ENCODE measurements at regions of chr12 and their contacts with region 1.

Region 1: DNA sequence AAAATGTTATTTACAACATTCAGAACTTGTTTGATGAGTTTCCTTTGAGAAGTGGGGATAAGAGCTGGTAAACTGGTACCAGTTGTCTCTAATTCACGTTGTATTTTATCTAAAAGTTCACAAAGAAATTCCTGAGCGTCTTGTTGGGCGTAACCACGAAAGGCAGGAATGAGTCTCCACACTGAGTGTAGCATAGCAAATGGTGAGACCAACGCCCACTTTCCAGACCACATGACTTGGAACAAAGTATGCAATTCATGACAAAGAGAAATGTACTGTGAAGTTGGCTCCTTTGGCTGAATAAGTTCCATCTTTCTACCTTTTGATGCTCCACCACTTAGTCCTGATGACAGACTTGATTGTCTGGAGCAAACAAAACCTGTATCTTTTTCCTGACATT is 18.4 kb downstream of the USP44 start:
- DNase-seq: no peak
- ATAC-seq: no peak
- H3K4me3 ChIP-seq: no peak overlapping the region
- H3K27ac ChIP-seq: no peak overlapping the region
- H3K4me1 ChIP-seq: no peaks in the 10 kb centered on the region
- H3K27me3 ChIP-seq: no peaks in the 10 kb centered on the region
- CTCF ChIP-seq: no peak
- POLR2A ChIP-seq: no peak

Region 2: GRCh38 chr12:95117178-95117599 is 415.7 kb before region 1 on chr12:
- intact Hi-C with region 1: loop called (anchors 10 kb)
- DNase-seq: peak; percentile 72 to 86 (median 82)
- ATAC-seq: peak; percentile 83
- H3K4me3 ChIP-seq: no peak overlapping the region
- H3K27ac ChIP-seq: peak overlapping the region in 3 of 4 donors; percentile 22 to 64 (median 40)
- H3K4me1 ChIP-seq: peaks cover 20% of the 10 kb centered on the region
- H3K27me3 ChIP-seq: no peaks in the 10 kb centered on the region
- CTCF ChIP-seq: peak; percentile 43 to 89 (median 80)
- POLR2A ChIP-seq: no peak

Region 3: DNA sequence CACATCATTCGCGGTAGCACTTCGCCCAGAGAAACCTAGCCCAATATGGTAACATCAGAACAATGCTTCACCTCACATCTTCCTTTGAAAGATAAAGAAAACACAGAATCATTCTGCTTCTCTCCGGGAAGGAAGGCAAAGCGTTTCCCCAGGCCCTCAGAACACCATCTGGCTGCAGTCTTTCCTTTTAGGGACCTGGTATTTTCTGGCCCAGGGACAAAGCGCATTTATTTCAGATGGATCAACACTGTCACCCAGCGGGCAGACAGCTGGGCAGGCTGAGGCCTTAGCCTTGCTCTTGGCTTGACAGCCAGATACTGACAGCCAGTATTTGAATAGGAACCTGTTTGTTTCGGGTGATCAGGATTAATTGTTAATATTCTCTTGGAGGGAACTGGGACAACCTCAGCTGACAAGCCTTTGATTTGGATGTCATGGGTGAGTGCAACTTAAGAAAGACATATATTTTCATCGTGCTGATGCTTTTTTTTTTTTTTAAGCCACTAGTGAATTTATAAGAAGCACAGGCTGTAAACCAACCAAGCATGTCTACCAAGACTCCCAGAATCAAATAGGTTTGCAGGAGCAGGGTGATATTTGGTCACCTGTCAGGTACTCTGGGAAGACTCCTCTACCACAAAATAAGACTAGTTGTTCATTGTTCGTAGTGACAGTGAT is 196.3 kb before region 1 on chr12:
- intact Hi-C with region 1: loop called (anchors 10 kb)
- DNase-seq: peak; percentile 80 to 88 (median 88)
- ATAC-seq: peak; percentile 96
- H3K4me3 ChIP-seq: no peak overlapping the region
- H3K27ac ChIP-seq: peak overlapping the region in 3 of 4 donors; percentile 1 to 53 (median 2)
- H3K4me1 ChIP-seq: peaks cover 6% of the 10 kb centered on the region
- H3K27me3 ChIP-seq: no peaks in the 10 kb centered on the region
- CTCF ChIP-seq: peak; percentile 77 to 97 (median 93)
- POLR2A ChIP-seq: no peak

Region 4: GRCh38 chr12:95700316-95700785 is 167.5 kb after region 1 on chr12:
- intact Hi-C with region 1: no loop called
- DNase-seq: no peak
- ATAC-seq: no peak
- H3K4me3 ChIP-seq: no peak overlapping the region
- H3K27ac ChIP-seq: no peak overlapping the region
- H3K4me1 ChIP-seq: peaks cover 32% of the 10 kb centered on the region
- H3K27me3 ChIP-seq: no peaks in the 10 kb centered on the region
- CTCF ChIP-seq: no peak
- POLR2A ChIP-seq: no peak

Measured in body of pancreas (tissue), 4 donors.